Caco-2 (cell line): ENCODE measurements at regions of chr16 and their contacts with region 1.

Region 1: DNA sequence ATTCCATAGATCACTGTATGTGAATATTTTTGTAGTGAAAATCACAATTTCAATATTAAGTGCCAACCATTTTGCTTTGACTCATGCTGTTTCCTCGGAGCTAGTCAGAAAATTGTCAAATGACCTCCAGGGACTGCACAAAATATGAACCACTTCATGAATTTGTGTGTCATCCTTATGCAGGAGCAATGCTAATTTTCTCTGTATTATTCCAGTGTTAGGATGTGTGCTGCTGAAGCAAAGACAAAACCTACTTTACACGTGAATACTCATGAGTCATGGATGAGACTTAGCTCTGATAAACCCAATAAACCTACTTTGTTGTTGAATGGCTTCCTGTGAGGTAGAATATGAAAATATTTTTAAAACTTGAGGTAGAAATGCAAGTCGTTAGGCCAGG is 65.2 kb downstream of the SHCBP1 start:
- DNase-seq: no peak
- H3K4me3 ChIP-seq: no peak overlapping the region
- H3K4me3 Mint-ChIP-seq: no peak overlapping the region
- H3K27ac Mint-ChIP-seq: no peak overlapping the region
- H3K4me1 ChIP-seq: no peaks in the 10 kb centered on the region
- H3K4me1 Mint-ChIP-seq: peaks cover 4% of the 10 kb centered on the region
- H3K27me3 ChIP-seq: no peaks in the 10 kb centered on the region
- H3K27me3 Mint-ChIP-seq: no peaks in the 10 kb centered on the region
- CTCF ChIP-seq: no peak

Region 2: DNA sequence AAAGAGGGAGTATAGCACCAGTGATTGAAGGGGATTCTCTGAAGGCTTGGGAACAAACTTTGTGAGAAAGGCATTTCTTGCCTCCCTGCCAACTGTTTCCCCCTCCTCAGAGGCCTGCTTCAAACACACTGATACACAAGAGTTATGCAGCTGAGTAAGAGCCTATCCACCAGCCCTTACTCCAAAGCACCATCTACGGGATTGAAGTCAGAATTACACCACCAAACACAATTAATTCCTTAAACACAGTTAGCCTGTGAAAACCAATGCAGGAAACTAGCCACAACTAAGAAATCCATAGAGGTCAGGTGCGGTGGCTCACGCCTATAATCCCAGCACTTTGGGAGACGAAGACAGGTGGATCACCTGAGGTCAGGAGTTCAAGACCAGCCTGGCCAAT is 73.1 kb before region 1 on chr16:
- CTCF ChIA-PET with region 1: no interaction called
- POLR2A ChIA-PET with region 1: no interaction called
- intact Hi-C with region 1: no loop called
- DNase-seq: peak in 1 of 2 experiments; percentile 11
- H3K4me3 ChIP-seq: no peak overlapping the region
- H3K4me3 Mint-ChIP-seq: no peak overlapping the region
- H3K27ac Mint-ChIP-seq: no peak overlapping the region
- H3K4me1 ChIP-seq: no peaks in the 10 kb centered on the region
- H3K4me1 Mint-ChIP-seq: no peaks in the 10 kb centered on the region
- H3K27me3 ChIP-seq: no peaks in the 10 kb centered on the region
- H3K27me3 Mint-ChIP-seq: peaks cover 4% of the 10 kb centered on the region
- CTCF ChIP-seq: no peak

Region 3: DNA sequence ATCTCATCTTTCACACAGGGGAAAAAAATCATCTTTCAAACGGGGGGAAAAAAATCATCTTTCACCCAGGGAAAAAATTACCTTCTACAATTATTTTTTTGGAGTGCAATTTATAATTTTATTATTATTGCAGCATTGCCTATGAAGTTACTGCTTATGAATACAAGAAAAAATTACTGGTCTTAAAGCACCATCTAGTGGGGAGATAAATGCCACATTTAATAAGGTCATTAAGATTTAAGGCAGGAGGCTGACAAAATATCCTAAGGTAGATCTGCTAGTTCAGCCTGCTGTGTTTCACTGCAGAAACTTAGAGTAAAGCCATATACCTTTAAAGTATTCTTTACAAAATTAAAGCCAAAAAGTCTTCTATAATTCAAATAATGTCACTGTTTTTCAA is 51.6 kb after region 1 on chr16:
- CTCF ChIA-PET with region 1: interaction called, 3 read pairs
- POLR2A ChIA-PET with region 1: no interaction called
- intact Hi-C with region 1: loop called (anchors 1 kb)
- DNase-seq: no peak
- H3K4me3 ChIP-seq: no peak overlapping the region
- H3K4me3 Mint-ChIP-seq: no peak overlapping the region
- H3K27ac Mint-ChIP-seq: no peak overlapping the region
- H3K4me1 ChIP-seq: no peaks in the 10 kb centered on the region
- H3K4me1 Mint-ChIP-seq: no peaks in the 10 kb centered on the region
- H3K27me3 ChIP-seq: no peaks in the 10 kb centered on the region
- H3K27me3 Mint-ChIP-seq: no peaks in the 10 kb centered on the region
- CTCF ChIP-seq: peak in 1 of 2 experiments; percentile 22

Region 4: DNA sequence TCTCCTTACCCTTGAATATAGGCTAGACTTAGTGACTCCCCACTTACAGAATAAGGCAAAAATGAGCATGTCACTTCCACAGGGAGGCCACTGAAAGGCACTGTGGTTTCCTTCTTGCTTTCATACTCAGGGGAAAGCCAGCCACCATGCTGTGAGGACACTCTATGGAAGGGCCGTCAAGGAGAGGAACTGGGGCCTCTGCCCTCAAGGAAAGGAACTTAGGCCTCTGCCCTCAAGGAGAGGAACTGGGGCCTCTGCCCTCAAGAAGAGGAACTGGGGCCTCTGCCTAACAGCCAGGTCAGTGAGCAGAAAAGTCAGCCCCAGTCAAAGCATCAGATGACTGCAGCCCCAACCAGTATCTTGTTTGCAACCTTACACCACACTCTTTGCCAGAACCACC is 103.0 kb after region 1 on chr16:
- CTCF ChIA-PET with region 1: no interaction called
- POLR2A ChIA-PET with region 1: no interaction called
- intact Hi-C with region 1: no loop called
- DNase-seq: no peak
- H3K4me3 ChIP-seq: no peak overlapping the region
- H3K4me3 Mint-ChIP-seq: no peak overlapping the region
- H3K27ac Mint-ChIP-seq: no peak overlapping the region
- H3K4me1 ChIP-seq: no peaks in the 10 kb centered on the region
- H3K4me1 Mint-ChIP-seq: no peaks in the 10 kb centered on the region
- H3K27me3 ChIP-seq: no peaks in the 10 kb centered on the region
- H3K27me3 Mint-ChIP-seq: no peaks in the 10 kb centered on the region
- CTCF ChIP-seq: no peak

Region 5: GRCh38 chr16:46801428-46802049 is 245.6 kb after region 1 on chr16:
- CTCF ChIA-PET with region 1: no interaction called
- POLR2A ChIA-PET with region 1: no interaction called
- intact Hi-C with region 1: loop called (anchors 5 kb)
- DNase-seq: peak in 1 of 2 experiments; percentile 24
- H3K4me3 ChIP-seq: no peak overlapping the region
- H3K4me3 Mint-ChIP-seq: no peak overlapping the region
- H3K27ac Mint-ChIP-seq: no peak overlapping the region
- H3K4me1 ChIP-seq: peaks cover 4% of the 10 kb centered on the region
- H3K4me1 Mint-ChIP-seq: peaks cover 6% of the 10 kb centered on the region
- H3K27me3 ChIP-seq: no peaks in the 10 kb centered on the region
- H3K27me3 Mint-ChIP-seq: no peaks in the 10 kb centered on the region
- CTCF ChIP-seq: peak; percentile 40 to 64